WTC11 (cell line): ENCODE measurements at regions of chr6 and their contacts with region 1.

Region 1: GRCh38 chr6:24581084-24581669 is 64.8 kb downstream of the KIAA0319 start:
- DNase-seq: peak; percentile 85
- ATAC-seq: peak; percentile 89
- H3K4me3 Mint-ChIP-seq: no peak overlapping the region
- H3K27ac Mint-ChIP-seq: no peak overlapping the region
- H3K4me1 Mint-ChIP-seq: peaks cover 25% of the 10 kb centered on the region
- H3K27me3 Mint-ChIP-seq: no peaks in the 10 kb centered on the region
- CTCF ChIP-seq: peak; percentile 55; the same call in 1 of the 2 replicates

Region 2: DNA sequence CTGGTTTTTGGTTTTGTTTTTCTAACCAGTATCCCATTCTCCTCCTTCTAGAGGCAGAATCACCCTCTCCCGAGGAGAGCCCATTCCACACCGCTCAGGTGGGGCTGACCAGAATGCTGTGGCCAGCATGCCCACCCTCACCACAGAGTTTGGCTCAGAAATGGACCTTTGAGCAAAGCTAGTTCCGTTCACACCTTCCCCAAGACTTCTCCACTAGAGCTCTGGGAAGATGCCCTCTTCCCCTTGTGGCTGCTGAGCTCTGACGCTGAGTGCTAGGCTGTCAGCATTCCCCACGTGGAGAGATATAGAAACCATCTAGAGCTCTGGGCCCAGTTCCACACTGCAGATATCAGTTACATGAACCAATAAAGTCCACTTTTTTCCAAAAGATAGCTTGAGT is 99.7 kb before region 1 on chr6:
- CTCF ChIA-PET with region 1: no interaction called
- POLR2A ChIA-PET with region 1: no interaction called
- DNase-seq: no peak
- ATAC-seq: no peak
- H3K4me3 Mint-ChIP-seq: no peak overlapping the region
- H3K27ac Mint-ChIP-seq: no peak overlapping the region
- H3K4me1 Mint-ChIP-seq: no peaks in the 10 kb centered on the region
- H3K27me3 Mint-ChIP-seq: no peaks in the 10 kb centered on the region
- CTCF ChIP-seq: no peak

Region 3: DNA sequence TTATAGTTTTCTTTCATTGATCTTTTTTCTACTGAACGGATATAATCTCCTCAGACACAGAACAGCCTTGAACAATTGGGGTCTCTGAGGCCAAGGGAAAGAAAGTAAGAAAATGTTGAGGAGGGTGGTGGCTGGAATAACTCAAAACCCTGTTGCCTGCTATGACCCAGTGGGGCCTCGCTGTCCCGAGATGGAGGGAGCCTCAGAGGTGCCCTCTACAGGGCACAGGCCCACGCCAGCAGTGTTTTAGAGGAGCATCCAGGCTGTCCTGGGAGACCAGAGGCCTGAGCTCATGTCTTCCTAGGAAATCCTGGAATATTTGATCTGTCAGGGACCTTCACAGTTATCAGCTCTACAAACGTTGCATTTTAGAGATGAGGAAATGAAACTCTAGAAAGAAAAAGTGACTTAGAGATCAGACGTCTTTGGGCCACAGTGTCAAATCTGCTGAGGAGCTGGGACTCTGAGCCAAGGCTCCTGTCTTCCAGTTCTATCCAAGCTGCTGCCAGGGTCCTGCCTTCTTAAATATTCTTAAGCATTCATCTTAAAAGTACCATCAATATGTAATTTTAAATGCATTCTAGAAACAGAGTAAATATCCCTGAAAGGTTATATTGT is 60.1 kb before region 1 on chr6:
- CTCF ChIA-PET with region 1: interaction called, 10 read pairs
- POLR2A ChIA-PET with region 1: no interaction called
- DNase-seq: peak; percentile 70
- ATAC-seq: peak; percentile 99
- H3K4me3 Mint-ChIP-seq: no peak overlapping the region
- H3K27ac Mint-ChIP-seq: no peak overlapping the region
- H3K4me1 Mint-ChIP-seq: no peaks in the 10 kb centered on the region
- H3K27me3 Mint-ChIP-seq: no peaks in the 10 kb centered on the region
- CTCF ChIP-seq: no peak

Region 4: DNA sequence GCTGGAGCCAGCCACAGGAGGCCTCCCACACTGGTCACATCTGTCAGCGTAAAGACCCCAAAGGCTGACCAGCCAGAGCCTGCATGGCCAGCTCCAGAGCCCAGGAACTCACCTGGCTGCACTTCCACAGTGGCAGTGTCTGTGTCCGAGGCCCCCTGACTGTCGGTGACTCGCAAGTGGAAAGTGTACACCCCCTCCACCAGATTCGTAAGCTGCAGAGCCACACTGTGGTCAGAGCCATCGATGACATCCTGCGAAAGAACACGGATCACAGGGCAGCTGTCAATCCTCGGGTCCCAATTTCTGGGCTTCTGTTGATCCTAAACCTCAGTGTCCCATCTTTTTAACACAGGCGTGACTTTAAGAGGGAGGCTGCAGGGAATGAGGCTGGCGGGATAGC is 17.1 kb before region 1 on chr6:
- CTCF ChIA-PET with region 1: interaction called, 12 read pairs
- POLR2A ChIA-PET with region 1: no interaction called
- DNase-seq: no peak
- ATAC-seq: no peak
- H3K4me3 Mint-ChIP-seq: no peak overlapping the region
- H3K27ac Mint-ChIP-seq: no peak overlapping the region
- H3K4me1 Mint-ChIP-seq: no peaks in the 10 kb centered on the region
- H3K27me3 Mint-ChIP-seq: no peaks in the 10 kb centered on the region; the same call in 1 of the 2 replicates
- CTCF ChIP-seq: no peak

Region 5: DNA sequence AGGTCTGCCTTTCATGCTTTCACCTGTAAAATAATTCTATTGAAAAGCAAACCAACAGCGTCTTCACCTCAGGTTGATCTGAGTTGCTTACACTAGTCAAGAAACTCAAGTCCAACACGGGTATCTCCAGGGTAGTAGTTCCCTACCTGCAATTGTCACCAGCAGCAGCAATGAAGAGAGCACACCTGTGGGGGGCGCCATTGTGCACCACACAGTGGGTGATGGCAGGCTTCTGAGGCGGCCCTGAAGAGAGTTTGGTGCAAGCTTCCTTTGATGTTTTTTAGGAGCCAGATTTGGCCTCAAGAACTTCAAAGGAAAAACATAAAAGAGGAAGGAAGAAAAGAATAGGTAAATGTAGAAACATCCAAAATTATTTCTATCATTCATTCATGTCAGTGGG is 19.7 kb after region 1 on chr6:
- CTCF ChIA-PET with region 1: interaction called, 15 read pairs
- POLR2A ChIA-PET with region 1: no interaction called
- DNase-seq: peak; percentile 56
- ATAC-seq: peak; percentile 81
- H3K4me3 Mint-ChIP-seq: no peak overlapping the region
- H3K27ac Mint-ChIP-seq: no peak overlapping the region
- H3K4me1 Mint-ChIP-seq: no peaks in the 10 kb centered on the region
- H3K27me3 Mint-ChIP-seq: no peaks in the 10 kb centered on the region
- CTCF ChIP-seq: peak; percentile 70

Region 6: GRCh38 chr6:24666641-24667377 is 85.6 kb after region 1 on chr6 and contains the starts of genes ACOT13 and TDP2:
- CTCF ChIA-PET with region 1: interaction called, 19 read pairs
- POLR2A ChIA-PET with region 1: interaction called, 6 read pairs
- DNase-seq: peak; percentile 96
- ATAC-seq: peak; percentile 96
- H3K4me3 Mint-ChIP-seq: peak within 1 kb of the TSS; percentile 85
- H3K27ac Mint-ChIP-seq: peak within 1 kb of the TSS; percentile 100
- H3K4me1 Mint-ChIP-seq: peaks cover 25% of the 10 kb centered on the region
- H3K27me3 Mint-ChIP-seq: peaks cover 6% of the 10 kb centered on the region; the same call in 1 of the 2 replicates
- CTCF ChIP-seq: 0 out of 2 replicates have a peak, but pooled peaks have one; percentile 16
- total RNA-seq, gene ACOT13: 54.0 to 64.0 TPM (median 62.8 TPM) in 3 replicates
- total RNA-seq, gene TDP2: 43.5 to 49.1 TPM (median 45.8 TPM) in 3 replicates

Region 7: DNA sequence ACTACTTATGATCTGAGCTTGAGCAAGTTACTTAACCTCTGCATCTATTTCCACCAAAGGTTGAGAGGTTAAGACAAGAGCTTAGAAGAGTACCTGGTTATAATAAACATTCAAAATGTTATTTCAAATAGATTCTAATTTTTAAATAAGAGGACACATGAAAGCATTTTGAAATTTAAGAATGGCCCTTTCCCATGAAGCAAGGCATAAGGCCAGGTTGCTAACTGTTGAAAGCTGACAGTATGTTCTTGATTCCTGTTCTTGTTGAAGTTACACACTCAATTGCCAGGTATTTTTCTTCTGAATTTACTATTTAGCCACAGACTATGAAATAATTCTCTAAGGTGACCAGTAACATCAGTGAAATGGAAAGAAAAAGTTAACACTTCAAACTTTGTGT is 123.3 kb after region 1 on chr6:
- CTCF ChIA-PET with region 1: interaction called, 11 read pairs
- POLR2A ChIA-PET with region 1: interaction called, 3 read pairs
- DNase-seq: no peak
- ATAC-seq: no peak
- H3K4me3 Mint-ChIP-seq: no peak overlapping the region
- H3K27ac Mint-ChIP-seq: no peak overlapping the region
- H3K4me1 Mint-ChIP-seq: peaks cover 6% of the 10 kb centered on the region
- H3K27me3 Mint-ChIP-seq: no peaks in the 10 kb centered on the region
- CTCF ChIP-seq: no peak